PC-9 (cell line): ENCODE measurements at regions of chr3 and their contacts with region 1.

Region 1: DNA sequence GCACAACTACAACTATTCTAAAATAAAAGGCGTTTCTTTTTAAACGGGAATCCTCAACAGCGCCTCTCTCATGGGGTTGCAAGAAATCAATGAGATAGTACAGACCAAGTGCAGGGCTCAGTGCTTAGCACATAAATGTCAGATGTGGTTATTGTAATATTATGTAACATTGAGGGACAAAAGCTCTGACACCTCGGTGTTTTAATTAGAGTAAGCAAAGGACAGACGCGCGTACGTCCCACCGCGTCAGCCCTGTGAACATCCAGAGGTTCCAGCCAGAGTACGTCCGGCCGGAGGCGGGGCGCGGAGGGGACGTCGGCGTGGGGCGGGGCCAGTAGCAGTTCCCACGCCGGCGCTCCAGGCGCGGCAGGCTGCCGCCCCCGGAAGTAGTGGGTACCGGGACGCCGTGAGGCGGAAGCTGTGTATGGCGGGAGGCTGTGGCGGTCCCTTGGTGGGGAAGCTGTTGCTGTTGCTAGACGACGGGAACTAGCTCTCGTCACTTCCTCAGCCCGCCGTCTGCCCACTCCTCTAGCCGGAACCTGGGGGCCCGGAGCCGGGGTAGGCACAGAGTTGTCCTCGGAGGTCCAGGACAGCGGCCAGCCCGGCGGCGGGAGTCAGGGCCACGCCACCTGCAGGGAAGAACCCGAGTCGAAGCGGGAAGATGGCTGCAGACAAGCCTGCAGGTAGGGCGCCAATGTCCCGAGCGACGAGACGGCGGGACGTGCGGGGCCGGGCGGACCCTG is at the start of gene CNOT10:
- DNase-seq: peak; percentile 78 to 94
- H3K4me3 ChIP-seq: peak within 1 kb of the TSS; percentile 67
- H3K27ac ChIP-seq: peak within 1 kb of the TSS; percentile 47
- H3K4me1 ChIP-seq: 0 out of 2 replicates have a peak, but pooled peaks cover 9% of the 10 kb centered on the region
- H3K27me3 ChIP-seq: no peaks in the 10 kb centered on the region
- CTCF ChIP-seq: no peak
- total RNA-seq, gene CNOT10: 25.5 and 43.7 TPM in 2 replicates

Region 2: DNA sequence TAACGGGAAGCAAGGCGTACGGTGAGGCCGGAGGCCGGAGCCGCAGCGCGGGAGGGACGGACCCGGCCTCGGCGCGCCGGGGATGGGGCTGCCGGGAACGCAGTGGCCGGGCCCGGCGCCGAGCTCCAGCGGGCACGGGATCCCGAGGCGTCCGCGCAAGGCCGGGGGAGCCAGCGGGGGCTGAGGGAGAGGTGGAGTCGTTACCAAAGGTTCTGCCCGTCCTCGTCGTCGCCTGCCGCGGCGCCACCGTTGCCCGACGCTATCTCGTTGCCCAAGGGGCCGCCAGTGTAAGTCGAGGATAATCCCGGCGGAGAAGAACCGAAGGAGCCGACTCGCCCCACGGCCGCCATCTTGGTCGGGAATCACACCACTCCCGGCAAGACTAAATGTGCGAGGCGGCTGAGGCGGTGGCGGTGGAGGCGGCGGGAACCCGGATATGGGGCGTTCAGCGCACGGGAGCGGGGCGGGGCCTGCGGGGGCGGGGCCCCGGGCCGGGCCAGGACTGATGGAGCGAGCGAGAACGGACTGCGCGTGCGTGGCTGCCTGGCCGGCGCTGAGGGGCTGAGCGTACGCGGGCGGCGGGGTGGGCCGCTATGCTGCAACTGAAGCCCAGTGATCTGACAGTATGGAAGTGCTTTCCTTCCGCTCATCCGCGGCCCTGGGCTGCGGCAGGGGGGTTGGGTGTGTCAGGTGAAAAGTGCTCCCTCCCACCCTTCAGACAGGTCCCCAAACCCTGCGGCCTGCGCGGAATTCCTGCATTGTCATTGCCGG is 114.4 kb before region 1 on chr3 and contains the start of gene DYNC1LI1:
- CTCF ChIA-PET with region 1: no interaction called
- POLR2A ChIA-PET with region 1: no interaction called
- intact Hi-C with region 1: loop called (anchors 1 kb)
- DNase-seq: peak; percentile 62 to 93
- H3K4me3 ChIP-seq: peak within 1 kb of the TSS; percentile 78
- H3K27ac ChIP-seq: peak within 1 kb of the TSS; percentile 78
- H3K4me1 ChIP-seq: peaks cover 8% of the 10 kb centered on the region; the same call in 1 of the 2 replicates
- H3K27me3 ChIP-seq: no peaks in the 10 kb centered on the region
- CTCF ChIP-seq: no peak
- total RNA-seq, gene DYNC1LI1: 30.1 and 32.3 TPM in 2 replicates

Region 3: GRCh38 chr3:32698506-32698905 is 13.5 kb after region 1 on chr3:
- CTCF ChIA-PET with region 1: no interaction called
- POLR2A ChIA-PET with region 1: no interaction called
- intact Hi-C with region 1: no loop called
- DNase-seq: no peak
- H3K4me3 ChIP-seq: no peak overlapping the region
- H3K27ac ChIP-seq: no peak overlapping the region
- H3K4me1 ChIP-seq: no peaks in the 10 kb centered on the region
- H3K27me3 ChIP-seq: no peaks in the 10 kb centered on the region
- CTCF ChIP-seq: no peak